Calu3 (cell line): ENCODE measurements at regions of chr17 and their contacts with region 1.

Region 1: GRCh38 chr17:39794249-39794970 is 56.7 kb downstream of the GRB7 start:
- DNase-seq: peak; percentile 73
- H3K4me3 Mint-ChIP-seq: no peak overlapping the region
- H3K27ac Mint-ChIP-seq: no peak overlapping the region
- H3K4me1 Mint-ChIP-seq: no peaks in the 10 kb centered on the region
- H3K27me3 Mint-ChIP-seq: no peaks in the 10 kb centered on the region
- CTCF ChIP-seq: no peak

Region 2: GRCh38 chr17:39513309-39513708 is 281.1 kb before region 1 on chr17:
- CTCF ChIA-PET with region 1: no interaction called
- intact Hi-C with region 1: no loop called
- DNase-seq: no peak
- H3K4me3 Mint-ChIP-seq: no peak overlapping the region
- H3K27ac Mint-ChIP-seq: no peak overlapping the region
- H3K4me1 Mint-ChIP-seq: no peaks in the 10 kb centered on the region
- H3K27me3 Mint-ChIP-seq: no peaks in the 10 kb centered on the region
- CTCF ChIP-seq: no peak

Region 3: DNA sequence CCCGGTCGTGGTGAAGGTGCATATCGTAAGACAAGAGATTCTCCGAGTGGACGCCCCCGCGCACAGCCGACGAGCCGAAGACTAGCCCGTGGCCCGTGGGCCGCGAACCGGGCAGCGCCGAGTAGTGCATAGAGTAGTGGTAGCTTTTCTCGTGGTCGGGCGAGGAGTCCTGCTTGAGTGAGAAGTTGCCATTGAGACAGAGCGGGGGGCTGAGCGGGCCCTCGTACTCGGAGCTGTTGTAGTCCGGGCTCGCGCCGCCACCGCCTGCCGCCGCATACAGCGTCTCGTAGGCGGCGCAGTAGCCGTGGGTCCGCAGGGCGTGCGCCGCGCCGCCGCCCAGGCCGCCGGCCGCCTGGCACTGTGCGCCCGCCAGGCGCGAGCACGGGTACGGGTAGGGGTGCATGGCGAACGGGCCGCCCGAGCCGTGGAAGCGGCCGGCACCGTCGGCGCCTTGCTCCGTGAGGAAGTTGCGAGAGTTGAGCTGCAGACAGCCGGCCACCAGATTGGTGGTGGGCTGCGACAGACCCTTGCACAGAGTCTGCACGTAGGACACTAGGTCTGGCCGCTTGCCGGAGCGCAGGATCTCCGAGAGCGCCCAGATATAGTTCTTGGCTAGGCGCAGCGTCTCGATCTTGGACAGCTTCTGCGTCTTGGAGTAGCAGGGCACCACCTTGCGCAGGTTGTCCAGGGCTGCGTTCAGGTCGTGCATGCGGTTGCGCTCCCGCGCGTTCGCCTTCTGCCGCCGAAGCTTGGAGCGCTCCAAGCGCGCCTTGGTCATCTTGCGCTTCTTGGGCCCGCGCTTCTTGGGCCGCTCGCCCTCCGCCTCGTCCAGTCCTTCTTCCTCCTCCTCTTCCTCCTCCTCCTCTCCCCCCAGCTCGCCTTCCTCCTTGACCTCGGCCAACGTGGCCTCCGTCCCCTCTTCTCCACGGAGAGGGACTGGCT is 188.6 kb before region 1 on chr17:
- CTCF ChIA-PET with region 1: interaction called, 10 read pairs
- intact Hi-C with region 1: no loop called
- DNase-seq: peak; percentile 97
- H3K4me3 Mint-ChIP-seq: peak overlapping the region; percentile 61
- H3K27ac Mint-ChIP-seq: no peak overlapping the region
- H3K4me1 Mint-ChIP-seq: peaks cover 46% of the 10 kb centered on the region
- H3K27me3 Mint-ChIP-seq: peaks cover 100% of the 10 kb centered on the region
- CTCF ChIP-seq: no peak

Region 4: GRCh38 chr17:39687811-39688518 is 106.4 kb before region 1 on chr17 and contains the start of gene PGAP3:
- CTCF ChIA-PET with region 1: interaction called, 20 read pairs
- intact Hi-C with region 1: no loop called
- DNase-seq: peak; percentile 100
- H3K4me3 Mint-ChIP-seq: peak within 1 kb of the TSS; percentile 64
- H3K27ac Mint-ChIP-seq: peak within 1 kb of the TSS; percentile 63
- H3K4me1 Mint-ChIP-seq: peaks cover 27% of the 10 kb centered on the region
- H3K27me3 Mint-ChIP-seq: no peaks in the 10 kb centered on the region
- CTCF ChIP-seq: no peak
- total RNA-seq, gene PGAP3: 1,186 and 1,276 TPM in 2 replicates

Region 5: GRCh38 chr17:39738931-39739884 is 55.2 kb before region 1 on chr17:
- CTCF ChIA-PET with region 1: interaction called, 36 read pairs
- intact Hi-C with region 1: no loop called
- DNase-seq: peak; percentile 100
- H3K4me3 Mint-ChIP-seq: peak overlapping the region; percentile 77
- H3K27ac Mint-ChIP-seq: peak overlapping the region; percentile 21
- H3K4me1 Mint-ChIP-seq: peaks cover 54% of the 10 kb centered on the region
- H3K27me3 Mint-ChIP-seq: no peaks in the 10 kb centered on the region
- CTCF ChIP-seq: no peak

Region 6: GRCh38 chr17:39845052-39845846 is 50.8 kb after region 1 on chr17:
- CTCF ChIA-PET with region 1: interaction called, 68 read pairs
- intact Hi-C with region 1: no loop called
- DNase-seq: peak; percentile 81
- H3K4me3 Mint-ChIP-seq: no peak overlapping the region
- H3K27ac Mint-ChIP-seq: no peak overlapping the region
- H3K4me1 Mint-ChIP-seq: peaks cover 10% of the 10 kb centered on the region
- H3K27me3 Mint-ChIP-seq: no peaks in the 10 kb centered on the region
- CTCF ChIP-seq: no peak

Region 7: DNA sequence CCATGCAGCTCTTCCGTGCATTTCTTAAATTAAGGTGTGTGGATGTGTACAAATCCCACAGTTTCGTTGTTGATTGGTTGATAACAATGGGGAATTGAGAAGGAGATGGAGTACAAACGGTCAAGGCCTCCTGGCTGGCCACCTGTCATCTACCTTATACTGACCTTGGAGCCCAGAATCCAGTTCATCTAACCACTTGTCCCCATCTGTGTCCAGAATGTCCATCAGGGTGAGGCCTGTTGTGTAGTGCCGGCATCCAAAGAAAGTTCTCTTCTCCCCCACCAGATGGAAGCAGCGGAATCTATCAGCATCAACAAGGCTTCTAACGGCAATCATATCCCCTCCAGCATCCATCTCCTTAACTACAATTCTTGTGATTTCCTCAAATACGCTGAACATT is 122.5 kb after region 1 on chr17:
- CTCF ChIA-PET with region 1: interaction called, 18 read pairs
- intact Hi-C with region 1: no loop called
- DNase-seq: peak; percentile 94
- H3K4me3 Mint-ChIP-seq: no peak overlapping the region
- H3K27ac Mint-ChIP-seq: no peak overlapping the region
- H3K4me1 Mint-ChIP-seq: peaks cover 24% of the 10 kb centered on the region
- H3K27me3 Mint-ChIP-seq: no peaks in the 10 kb centered on the region
- CTCF ChIP-seq: no peak

Region 8: DNA sequence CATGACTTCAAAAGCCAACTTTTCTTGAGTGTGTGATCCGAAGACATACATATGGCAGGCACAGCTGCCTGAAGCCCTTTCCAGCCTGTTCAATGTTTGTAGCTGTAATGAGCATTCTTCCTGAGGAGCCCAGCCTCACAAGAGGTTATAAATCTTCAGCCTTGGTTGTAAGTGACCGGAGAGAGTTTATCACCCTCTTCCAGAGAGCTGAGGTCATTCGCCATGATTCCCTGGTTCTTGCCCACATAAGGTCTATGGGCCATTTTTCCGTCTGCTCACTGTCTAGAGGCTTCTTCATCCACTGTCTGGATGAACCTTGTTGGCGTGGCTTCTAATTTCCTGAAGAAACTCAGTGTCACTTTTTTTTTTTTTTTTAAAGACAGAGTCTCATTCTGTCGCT is 211.1 kb after region 1 on chr17:
- CTCF ChIA-PET with region 1: interaction called, 12 read pairs
- intact Hi-C with region 1: no loop called
- DNase-seq: no peak
- H3K4me3 Mint-ChIP-seq: no peak overlapping the region
- H3K27ac Mint-ChIP-seq: no peak overlapping the region
- H3K4me1 Mint-ChIP-seq: no peaks in the 10 kb centered on the region
- H3K27me3 Mint-ChIP-seq: peaks cover 21% of the 10 kb centered on the region
- CTCF ChIP-seq: no peak